HepG2 (cell line): ENCODE measurements at regions of chr10 and their contacts with region 1.

Region 1: DNA sequence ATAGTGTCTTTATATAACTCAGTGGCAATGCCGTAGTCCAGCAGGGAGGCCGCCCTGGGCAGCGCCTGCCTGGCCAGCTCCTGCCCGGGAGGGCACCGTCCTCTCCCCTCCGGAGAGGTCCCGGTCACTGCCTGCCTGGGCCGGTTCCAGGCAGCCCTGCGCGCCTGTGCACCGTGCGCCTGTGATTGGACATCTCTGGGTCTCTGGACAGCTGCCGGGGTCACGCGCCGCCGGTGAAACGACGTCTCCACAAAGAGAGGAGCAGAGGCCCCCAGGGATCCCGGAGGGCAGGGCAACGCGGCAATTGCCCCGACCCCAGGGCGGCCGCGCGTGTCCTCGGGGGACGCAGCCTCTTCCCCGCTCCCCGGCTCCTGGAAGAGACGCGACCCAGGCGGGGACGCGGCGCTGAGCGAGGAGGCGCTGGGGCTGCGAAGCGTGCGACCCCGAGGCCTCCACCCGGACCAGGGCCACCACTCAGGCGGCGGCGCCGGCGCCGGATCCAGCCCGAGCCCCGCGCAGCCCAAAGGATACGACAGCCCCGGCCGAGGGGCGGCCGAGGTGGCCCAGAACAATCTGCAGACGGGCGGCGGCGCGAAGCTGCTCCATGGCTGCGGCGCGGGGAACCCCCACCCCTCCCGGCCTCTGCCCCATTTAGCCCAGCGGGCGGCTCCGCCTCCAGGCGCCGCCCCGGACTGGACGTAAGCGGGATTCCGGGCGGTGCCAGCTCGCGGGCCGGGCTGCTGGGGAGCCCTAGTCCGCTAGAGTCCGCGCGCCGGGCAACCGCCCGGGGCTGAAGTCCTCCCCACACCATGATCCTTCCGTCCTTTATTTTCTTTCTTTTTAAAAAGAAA is at the start of gene PHYH:
- DNase-seq: peak; percentile 70
- ATAC-seq: peak; percentile 92
- H3K4me3 ChIP-seq: peak within 1 kb of the TSS; percentile 70 to 79 (median 74)
- H3K27ac ChIP-seq: peak within 1 kb of the TSS; percentile 96
- H3K4me1 ChIP-seq: peaks cover 35% of the 10 kb centered on the region
- H3K27me3 ChIP-seq: no peaks in the 10 kb centered on the region
- CTCF ChIP-seq: no peak
- EP300 ChIP-seq: no peak; a peak in 1 of 4 replicates
- POLR2A ChIP-seq: peak; percentile 90 to 97
- RAD21 ChIP-seq: peak; percentile 31
- total RNA-seq, gene PHYH: 34.5 and 47.9 TPM in 2 replicates

Region 2: GRCh38 chr10:13160934-13161856 is 138.5 kb before region 1 on chr10 and contains the start of gene MCM10:
- CTCF ChIA-PET with region 1: interaction called, 9 read pairs
- POLR2A ChIA-PET with region 1: interaction called, 7 read pairs
- in situ Hi-C with region 1: no loop called
- intact Hi-C with region 1: loop called (anchors 1 kb)
- DNase-seq: peak; percentile 98
- ATAC-seq: peak; percentile 99
- H3K4me3 ChIP-seq: peak within 1 kb of the TSS; percentile 67 to 87 (median 79)
- H3K27ac ChIP-seq: peak within 1 kb of the TSS; percentile 34
- H3K4me1 ChIP-seq: peaks cover 26% of the 10 kb centered on the region
- H3K27me3 ChIP-seq: no peaks in the 10 kb centered on the region
- CTCF ChIP-seq: peak; percentile 95
- EP300 ChIP-seq: peak in 1 of 2 experiments; percentile 34; a peak in 2 of 4 replicates
- POLR2A ChIP-seq: peak in 1 of 2 experiments; percentile 48; a peak in 2 of 4 replicates
- RAD21 ChIP-seq: peak; percentile 80
- total RNA-seq, gene MCM10: 31.3 and 41.8 TPM in 2 replicates

Region 3: DNA sequence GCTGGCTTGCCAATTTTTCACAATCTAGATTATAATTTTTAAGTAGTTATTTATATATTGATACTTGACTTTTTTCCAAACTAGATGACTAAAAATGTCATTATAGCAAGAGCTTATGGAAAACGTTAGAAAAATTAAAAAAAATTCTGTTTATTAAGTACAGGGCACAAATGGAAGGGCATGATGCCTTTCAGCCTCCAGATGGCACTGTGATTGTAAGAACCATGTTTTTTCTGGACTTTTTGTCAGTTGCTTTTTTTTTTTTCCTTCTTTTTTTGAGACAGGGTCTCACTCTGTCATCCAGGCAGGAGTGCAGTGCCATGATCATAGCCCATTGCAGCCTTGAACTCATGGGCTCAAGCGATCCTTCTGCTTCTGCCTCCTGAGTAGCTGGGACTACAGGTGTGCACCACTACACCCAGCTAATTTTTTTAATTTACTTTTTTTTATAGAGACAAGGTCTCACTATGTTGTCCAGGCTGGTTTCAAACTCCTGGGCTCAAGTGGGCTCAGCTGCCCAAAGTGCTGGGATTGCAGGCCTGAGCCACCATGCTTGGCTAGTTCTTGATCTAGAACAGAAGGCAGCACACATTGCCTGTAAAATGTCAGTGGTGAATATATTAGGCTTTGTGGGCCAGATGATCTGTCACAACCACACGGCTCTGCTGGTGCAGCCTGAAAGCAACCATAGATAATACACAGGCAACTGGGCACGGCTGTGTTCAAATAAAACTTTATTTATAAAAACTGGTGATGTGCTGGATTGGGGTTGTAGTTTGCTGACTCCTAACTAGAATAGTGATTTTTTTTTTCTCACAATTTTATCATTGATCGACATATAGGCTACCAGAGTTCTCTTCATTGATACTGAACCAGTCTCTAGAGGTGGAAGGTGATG is 92.9 kb before region 1 on chr10:
- CTCF ChIA-PET with region 1: interaction called, 3 read pairs
- POLR2A ChIA-PET with region 1: no interaction called
- in situ Hi-C with region 1: no loop called
- intact Hi-C with region 1: loop called (anchors 1 kb)
- DNase-seq: peak; percentile 6
- ATAC-seq: no peak
- H3K4me3 ChIP-seq: no peak overlapping the region
- H3K27ac ChIP-seq: no peak overlapping the region
- H3K4me1 ChIP-seq: no peaks in the 10 kb centered on the region
- H3K27me3 ChIP-seq: no peaks in the 10 kb centered on the region
- CTCF ChIP-seq: peak; percentile 48
- EP300 ChIP-seq: no peak
- POLR2A ChIP-seq: no peak
- RAD21 ChIP-seq: no peak

Region 4: GRCh38 chr10:13271552-13272163 is 28.0 kb before region 1 on chr10:
- CTCF ChIA-PET with region 1: interaction called, 37 read pairs
- POLR2A ChIA-PET with region 1: interaction called, 109 read pairs
- in situ Hi-C with region 1: no loop called
- intact Hi-C with region 1: loop called (anchors 1 kb)
- DNase-seq: peak; percentile 77
- ATAC-seq: peak; percentile 94
- H3K4me3 ChIP-seq: peak overlapping the region; percentile 59 to 71 (median 66)
- H3K27ac ChIP-seq: peak overlapping the region; percentile 64
- H3K4me1 ChIP-seq: peaks cover 25% of the 10 kb centered on the region
- H3K27me3 ChIP-seq: no peaks in the 10 kb centered on the region
- CTCF ChIP-seq: peak; percentile 95
- EP300 ChIP-seq: no peak
- POLR2A ChIP-seq: 0 out of 4 replicates have a peak, but pooled peaks of 1 of the 2 experiments have one; percentile 33
- RAD21 ChIP-seq: peak; percentile 81

Region 5: GRCh38 chr10:13276749-13277365 is 22.8 kb before region 1 on chr10:
- CTCF ChIA-PET with region 1: interaction called, 37 read pairs
- POLR2A ChIA-PET with region 1: interaction called, 109 read pairs
- in situ Hi-C with region 1: no loop called
- intact Hi-C with region 1: no loop called
- DNase-seq: no peak
- ATAC-seq: no peak
- H3K4me3 ChIP-seq: no peak overlapping the region
- H3K27ac ChIP-seq: no peak overlapping the region
- H3K4me1 ChIP-seq: peaks cover 24% of the 10 kb centered on the region
- H3K27me3 ChIP-seq: no peaks in the 10 kb centered on the region
- CTCF ChIP-seq: no peak
- EP300 ChIP-seq: no peak
- POLR2A ChIP-seq: no peak
- RAD21 ChIP-seq: no peak

Region 6: DNA sequence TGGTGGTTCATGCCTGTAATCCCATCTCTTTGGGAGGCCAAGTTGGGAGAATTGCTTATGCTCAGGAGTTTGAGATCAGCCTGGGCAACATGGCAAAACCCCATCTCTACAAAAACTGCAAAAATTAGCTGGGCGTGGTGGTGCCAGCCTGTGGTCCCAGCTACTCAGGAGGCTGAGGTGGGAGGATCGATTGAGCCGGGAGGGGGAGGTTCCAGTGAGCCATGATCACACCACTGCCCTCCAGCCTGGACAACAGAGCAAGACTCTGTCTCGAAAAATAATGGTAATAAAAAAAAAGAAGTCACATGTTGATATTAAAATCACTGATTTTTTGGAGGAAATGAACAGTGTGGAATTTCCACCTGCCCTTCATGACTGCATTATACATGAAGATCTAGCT is 15.6 kb before region 1 on chr10:
- CTCF ChIA-PET with region 1: no interaction called
- POLR2A ChIA-PET with region 1: interaction called, 21 read pairs
- in situ Hi-C with region 1: no loop called
- intact Hi-C with region 1: loop called (anchors 1 kb)
- DNase-seq: no peak
- ATAC-seq: peak; percentile 15; the same call in 2 of the 3 replicates
- H3K4me3 ChIP-seq: no peak overlapping the region
- H3K27ac ChIP-seq: peak overlapping the region; percentile 73
- H3K4me1 ChIP-seq: peaks cover 53% of the 10 kb centered on the region
- H3K27me3 ChIP-seq: no peaks in the 10 kb centered on the region
- CTCF ChIP-seq: no peak
- EP300 ChIP-seq: no peak
- POLR2A ChIP-seq: no peak
- RAD21 ChIP-seq: no peak

Region 7: GRCh38 chr10:13335881-13336280 is 36.2 kb after region 1 on chr10:
- CTCF ChIA-PET with region 1: no interaction called
- POLR2A ChIA-PET with region 1: no interaction called
- in situ Hi-C with region 1: no loop called
- intact Hi-C with region 1: no loop called
- DNase-seq: no peak
- ATAC-seq: no peak
- H3K4me3 ChIP-seq: no peak overlapping the region
- H3K27ac ChIP-seq: no peak overlapping the region
- H3K4me1 ChIP-seq: no peaks in the 10 kb centered on the region
- H3K27me3 ChIP-seq: no peaks in the 10 kb centered on the region
- CTCF ChIP-seq: no peak
- EP300 ChIP-seq: no peak
- POLR2A ChIP-seq: no peak
- RAD21 ChIP-seq: no peak

Region 8: DNA sequence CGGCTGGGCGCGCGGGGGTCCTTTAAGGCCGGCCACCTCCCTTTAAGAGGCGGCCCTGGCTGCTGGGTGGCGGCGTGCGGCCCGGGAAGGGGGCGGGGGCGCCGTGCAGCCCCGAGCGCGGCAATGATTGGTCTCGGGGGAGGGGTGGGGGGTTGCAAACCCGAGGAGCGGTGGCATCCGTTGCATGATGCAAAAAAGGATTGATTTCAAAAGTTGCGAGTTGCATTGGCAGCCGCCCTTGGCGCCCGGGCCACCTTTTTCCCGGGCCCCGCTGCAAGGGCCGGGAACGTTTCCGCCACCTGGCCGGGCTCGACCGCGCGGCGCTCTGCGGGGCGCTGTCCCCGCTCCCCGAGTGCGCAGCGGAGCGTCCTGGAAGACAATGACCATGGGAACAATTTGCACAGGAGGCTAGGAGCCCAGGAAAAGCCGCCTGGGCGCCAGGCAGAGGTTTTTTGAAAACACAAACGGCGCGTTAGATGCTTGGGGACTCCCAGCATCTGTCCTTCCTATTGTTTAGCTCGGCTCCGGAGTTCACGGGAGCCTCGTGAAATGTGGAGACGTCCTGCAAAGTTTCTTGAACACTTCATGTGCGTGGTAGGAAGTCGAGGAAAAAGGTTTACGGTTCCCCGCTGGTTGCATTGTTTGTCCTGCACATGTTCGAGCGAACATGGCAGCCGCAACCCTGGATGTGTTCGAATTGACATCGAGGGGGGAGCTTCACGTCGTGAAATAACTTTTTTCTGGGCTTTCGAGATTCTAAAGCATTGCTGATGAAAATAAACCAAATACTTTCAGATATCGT is 48.8 kb after region 1 on chr10 and contains the start of gene SEPHS1:
- CTCF ChIA-PET with region 1: no interaction called
- POLR2A ChIA-PET with region 1: interaction called, 8 read pairs
- in situ Hi-C with region 1: no loop called
- intact Hi-C with region 1: loop called (anchors 5 kb)
- DNase-seq: peak; percentile 75
- ATAC-seq: peak; percentile 76
- H3K4me3 ChIP-seq: peak within 1 kb of the TSS; percentile 79 to 96 (median 86)
- H3K27ac ChIP-seq: peak within 1 kb of the TSS; percentile 92
- H3K4me1 ChIP-seq: peaks cover 49% of the 10 kb centered on the region
- H3K27me3 ChIP-seq: no peaks in the 10 kb centered on the region; a peak in 1 of 5 replicates
- CTCF ChIP-seq: no peak; the same call in 1 of the 2 replicates
- EP300 ChIP-seq: no peak
- POLR2A ChIP-seq: peak; percentile 57 to 62; a peak in 3 of 4 replicates
- RAD21 ChIP-seq: no peak
- total RNA-seq, gene SEPHS1: 61.5 and 76.0 TPM in 2 replicates

Region 9: GRCh38 chr10:14604181-14605142 is 1304.8 kb after region 1 on chr10:
- CTCF ChIA-PET with region 1: no interaction called
- POLR2A ChIA-PET with region 1: no interaction called
- in situ Hi-C with region 1: no loop called
- intact Hi-C with region 1: no loop called
- DNase-seq: no peak
- ATAC-seq: peak; percentile 79
- H3K4me3 ChIP-seq: peak overlapping the region; percentile 38 to 91 (median 74); a peak in 5 of 6 replicates
- H3K27ac ChIP-seq: no peak overlapping the region
- H3K4me1 ChIP-seq: peaks cover 71% of the 10 kb centered on the region
- H3K27me3 ChIP-seq: no peaks in the 10 kb centered on the region
- CTCF ChIP-seq: no peak
- EP300 ChIP-seq: no peak
- POLR2A ChIP-seq: peak in 1 of 2 experiments; percentile 73; a peak in 2 of 4 replicates
- RAD21 ChIP-seq: no peak